ENCODE measurements at regions of chrX and their contacts with region 1.

Region 1: GRCh38 chrX:104922206-104922621 is 298.3 kb downstream of the TEX13A start:
- DNase-seq: peak; percentile 46
- H3K4me3 Mint-ChIP-seq: no peak overlapping the region
- H3K27ac Mint-ChIP-seq: no peak overlapping the region
- H3K4me1 Mint-ChIP-seq: no peaks in the 10 kb centered on the region
- H3K27me3 Mint-ChIP-seq: no peaks in the 10 kb centered on the region

Region 2: GRCh38 chrX:104482757-104483156 is 439.5 kb before region 1 on chrX:
- intact Hi-C with region 1: loop called (anchors 2 kb)
- DNase-seq: no peak
- H3K4me3 Mint-ChIP-seq: no peak overlapping the region
- H3K27ac Mint-ChIP-seq: no peak overlapping the region
- H3K4me1 Mint-ChIP-seq: no peaks in the 10 kb centered on the region
- H3K27me3 Mint-ChIP-seq: peaks cover 2% of the 10 kb centered on the region

Region 3: GRCh38 chrX:104762641-104763040 is 159.6 kb before region 1 on chrX:
- intact Hi-C with region 1: no loop called
- DNase-seq: no peak
- H3K4me3 Mint-ChIP-seq: no peak overlapping the region
- H3K27ac Mint-ChIP-seq: no peak overlapping the region
- H3K4me1 Mint-ChIP-seq: no peaks in the 10 kb centered on the region
- H3K27me3 Mint-ChIP-seq: no peaks in the 10 kb centered on the region